Pancreas (tissue), 10 donors: ENCODE measurements at regions of chr22 and their contacts with region 1.

Region 1: GRCh38 chr22:16866167-16866566 is 41.0 kb upstream of the XKR3 start:
- DNase-seq: no peak
- ATAC-seq: no peak
- H3K4me3 ChIP-seq: no peak overlapping the region
- H3K27ac ChIP-seq: no peak overlapping the region
- H3K4me1 ChIP-seq: no peaks in the 10 kb centered on the region
- H3K27me3 ChIP-seq: no peaks in the 10 kb centered on the region
- CTCF ChIP-seq: no peak

Region 2: GRCh38 chr22:16783930-16784354 is 82.2 kb before region 1 on chr22:
- intact Hi-C with region 1: loop called in 1 of 3 experiments (anchors 10 kb)
- DNase-seq: no peak
- ATAC-seq: no peak
- H3K4me3 ChIP-seq: no peak overlapping the region
- H3K27ac ChIP-seq: no peak overlapping the region
- H3K4me1 ChIP-seq: no peaks in the 10 kb centered on the region
- H3K27me3 ChIP-seq: peaks cover 0 to 3% (median 2%) of the 10 kb centered on the region in 4 donors
- CTCF ChIP-seq: no peak

Region 3: GRCh38 chr22:17009640-17010291 is 143.6 kb after region 1 on chr22:
- intact Hi-C with region 1: no loop called
- DNase-seq: no peak
- ATAC-seq: no peak
- H3K4me3 ChIP-seq: no peak overlapping the region
- H3K27ac ChIP-seq: no peak overlapping the region
- H3K4me1 ChIP-seq: no peaks in the 10 kb centered on the region
- H3K27me3 ChIP-seq: peaks cover 0 to 11% (median 4%) of the 10 kb centered on the region in 4 donors
- CTCF ChIP-seq: no peak